RWPE1 (cell line): ENCODE measurements at regions of chr1 and their contacts with region 1.

Region 1: DNA sequence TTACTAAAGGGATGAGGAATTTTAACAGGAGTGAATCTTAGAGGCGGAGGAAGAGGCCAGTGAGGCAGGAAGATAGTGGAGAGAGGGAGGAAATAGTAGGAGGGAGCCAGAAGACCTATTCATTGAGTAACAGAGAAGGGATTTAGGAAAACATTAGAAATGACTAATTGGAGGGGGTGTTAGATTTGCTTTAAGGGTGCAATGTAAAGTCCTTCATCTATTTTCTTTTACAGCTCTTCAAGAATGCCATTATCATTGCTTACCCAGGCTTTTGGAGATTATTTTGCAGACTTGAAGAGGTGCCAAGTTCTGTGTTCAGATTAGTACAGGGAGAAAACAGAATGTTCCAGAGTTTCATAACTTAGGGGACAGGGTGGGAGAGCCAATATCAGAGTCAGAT is 33.8 kb downstream of the OR10J1 start:
- DNase-seq: no peak
- H3K27ac ChIP-seq: no peak overlapping the region
- CTCF ChIP-seq: no peak

Region 2: DNA sequence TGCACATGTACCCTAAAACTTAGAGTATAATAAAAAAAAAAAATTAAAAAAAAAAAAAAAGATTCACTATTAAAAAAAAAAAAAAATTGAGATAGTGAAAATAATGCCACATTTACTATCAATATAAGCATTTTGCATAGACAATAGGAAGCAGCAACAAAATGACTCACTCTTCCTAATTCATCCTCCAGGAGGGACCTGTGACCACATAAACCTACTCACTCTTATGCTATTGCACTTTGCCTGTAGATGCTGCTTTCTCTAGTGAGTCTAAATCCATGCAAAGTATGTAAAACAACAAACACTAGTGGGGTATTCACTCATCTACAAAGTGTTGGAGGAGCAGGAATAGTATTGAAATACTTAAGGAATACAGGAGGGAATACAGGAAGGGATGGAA is 59.6 kb after region 1 on chr1:
- CTCF ChIA-PET with region 1: no interaction called
- POLR2A ChIA-PET with region 1: interaction called, 14 read pairs
- DNase-seq: peak; percentile 2
- H3K27ac ChIP-seq: no peak overlapping the region
- CTCF ChIP-seq: no peak